H1 (cell line): ENCODE measurements at regions of chr10 and their contacts with region 1.

Region 1: GRCh38 chr10:93503075-93503474 is 6.7 kb downstream of the CEP55 start:
- DNase-seq: no peak
- H3K4me3 ChIP-seq: no peak overlapping the region
- H3K27ac ChIP-seq: no peak overlapping the region
- H3K4me1 ChIP-seq: no peaks in the 10 kb centered on the region
- H3K27me3 ChIP-seq: no peaks in the 10 kb centered on the region
- CTCF ChIP-seq: no peak
- EP300 ChIP-seq: no peak
- POLR2A ChIP-seq: no peak
- RAD21 ChIP-seq: no peak

Region 2: GRCh38 chr10:93488956-93489528 is 14.0 kb before region 1 on chr10:
- CTCF ChIA-PET with region 1: interaction called, 201 read pairs
- POLR2A ChIA-PET with region 1: no interaction called
- DNase-seq: no peak
- H3K4me3 ChIP-seq: no peak overlapping the region
- H3K27ac ChIP-seq: no peak overlapping the region
- H3K4me1 ChIP-seq: no peaks in the 10 kb centered on the region
- H3K27me3 ChIP-seq: 0 out of 7 replicates have a peak, but pooled peaks cover 0 to under 1% (median 0%) of the 10 kb centered on the region in 4 experiments
- CTCF ChIP-seq: no peak
- EP300 ChIP-seq: no peak
- POLR2A ChIP-seq: no peak
- RAD21 ChIP-seq: no peak

Region 3: DNA sequence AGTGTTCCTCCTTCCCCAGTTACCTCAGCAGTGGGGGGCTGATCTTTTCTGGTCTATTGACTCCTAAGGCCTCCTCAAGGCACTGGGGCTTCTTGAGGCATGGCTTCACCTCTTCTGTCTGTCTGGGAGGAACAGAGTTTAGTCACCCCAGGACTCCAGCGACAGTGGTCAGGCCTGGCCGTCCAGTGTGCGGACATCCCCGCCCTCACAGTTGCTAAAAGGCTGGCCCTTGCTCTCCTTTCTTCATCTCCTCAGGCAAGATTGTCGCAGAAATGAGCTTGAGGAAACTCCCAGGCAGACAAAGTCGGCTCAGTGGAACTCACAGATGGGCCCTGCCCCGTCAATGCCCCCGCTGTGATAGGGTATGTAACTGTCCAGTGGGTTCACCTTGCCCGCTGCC is 56.4 kb after region 1 on chr10:
- CTCF ChIA-PET with region 1: no interaction called
- POLR2A ChIA-PET with region 1: no interaction called
- DNase-seq: no peak
- H3K4me3 ChIP-seq: no peak overlapping the region
- H3K27ac ChIP-seq: no peak overlapping the region
- H3K4me1 ChIP-seq: peaks cover 0 to 4% (median 1%) of the 10 kb centered on the region in 4 experiments; a peak in 2 of 7 replicates
- H3K27me3 ChIP-seq: peaks cover 0 to 5% (median 1%) of the 10 kb centered on the region in 4 experiments; a peak in 5 of 7 replicates
- CTCF ChIP-seq: no peak
- EP300 ChIP-seq: no peak
- POLR2A ChIP-seq: no peak
- RAD21 ChIP-seq: no peak